ENCODE measurements at regions of chr9 and their contacts with region 1.

Region 1: GRCh38 chr9:108272349-108272899 is 583.4 kb downstream of the ACTL7B start:
- DNase-seq: peak; percentile 55
- H3K4me3 ChIP-seq: no peak overlapping the region
- H3K27ac ChIP-seq: peak overlapping the region; percentile 35
- H3K4me1 ChIP-seq: peaks cover 25% of the 10 kb centered on the region
- H3K27me3 ChIP-seq: no peaks in the 10 kb centered on the region
- CTCF ChIP-seq: peak; percentile 61 to 70

Region 2: GRCh38 chr9:107465467-107466451 is 806.7 kb before region 1 on chr9:
- CTCF ChIA-PET with region 1: interaction called, 3 read pairs
- dilution Hi-C with region 1: no loop called
- in situ Hi-C with region 1: loop called in 1 of 2 experiments (anchors 25 kb)
- intact Hi-C with region 1: loop called (anchors 1 kb)
- DNase-seq: peak; percentile 50
- H3K4me3 ChIP-seq: peak overlapping the region; percentile 51 to 71 (median 59)
- H3K27ac ChIP-seq: no peak overlapping the region
- H3K4me1 ChIP-seq: peaks cover 11% of the 10 kb centered on the region
- H3K27me3 ChIP-seq: no peaks in the 10 kb centered on the region
- CTCF ChIP-seq: peak; percentile 63 to 83

Region 3: GRCh38 chr9:107637421-107638420 is 634.7 kb before region 1 on chr9:
- CTCF ChIA-PET with region 1: no interaction called
- dilution Hi-C with region 1: no loop called
- in situ Hi-C with region 1: no loop called
- intact Hi-C with region 1: loop called (anchors 1 kb)
- DNase-seq: peak; percentile 50
- H3K4me3 ChIP-seq: peak overlapping the region; percentile 39 to 68 (median 54)
- H3K27ac ChIP-seq: no peak overlapping the region
- H3K4me1 ChIP-seq: no peaks in the 10 kb centered on the region
- H3K27me3 ChIP-seq: no peaks in the 10 kb centered on the region
- CTCF ChIP-seq: no peak

Region 4: GRCh38 chr9:107749787-107750444 is 522.5 kb before region 1 on chr9:
- CTCF ChIA-PET with region 1: no interaction called
- dilution Hi-C with region 1: no loop called
- in situ Hi-C with region 1: no loop called
- intact Hi-C with region 1: loop called (anchors 5 kb)
- DNase-seq: peak; percentile 88
- H3K4me3 ChIP-seq: no peak overlapping the region
- H3K27ac ChIP-seq: peak overlapping the region; percentile 60
- H3K4me1 ChIP-seq: peaks cover 36% of the 10 kb centered on the region
- H3K27me3 ChIP-seq: no peaks in the 10 kb centered on the region
- CTCF ChIP-seq: no peak

Region 5: DNA sequence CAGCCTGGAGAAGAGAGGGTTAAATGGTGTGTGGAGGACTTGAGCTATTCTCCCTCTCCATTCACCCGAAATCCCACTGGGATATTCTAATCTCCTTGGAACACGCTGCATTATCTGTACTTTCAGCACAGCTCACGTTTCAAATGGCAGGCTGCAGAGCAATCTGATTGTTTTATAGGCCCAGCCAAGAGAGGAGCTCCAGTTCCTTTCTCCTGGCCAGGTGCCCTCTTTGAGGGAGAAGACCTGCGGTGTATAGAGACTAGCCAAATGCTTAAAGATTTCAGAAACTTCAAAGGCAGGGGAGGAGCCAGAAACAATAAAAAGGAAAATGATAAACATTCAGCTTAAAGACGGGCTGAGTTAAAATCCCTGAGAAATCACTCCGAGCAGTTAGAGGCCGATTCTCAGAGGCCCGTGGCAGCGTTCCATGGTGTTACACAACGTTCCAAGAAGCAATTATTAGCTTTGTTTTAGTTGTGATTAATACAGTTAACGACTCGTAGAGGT is 218.8 kb before region 1 on chr9:
- CTCF ChIA-PET with region 1: no interaction called
- dilution Hi-C with region 1: no loop called
- in situ Hi-C with region 1: no loop called
- intact Hi-C with region 1: loop called (anchors 1 kb)
- DNase-seq: peak; percentile 76
- H3K4me3 ChIP-seq: no peak overlapping the region
- H3K27ac ChIP-seq: peak overlapping the region; percentile 79
- H3K4me1 ChIP-seq: peaks cover 76% of the 10 kb centered on the region
- H3K27me3 ChIP-seq: no peaks in the 10 kb centered on the region
- CTCF ChIP-seq: no peak

Region 6: GRCh38 chr9:108322326-108323098 is 50.1 kb after region 1 on chr9:
- CTCF ChIA-PET with region 1: no interaction called
- dilution Hi-C with region 1: no loop called
- in situ Hi-C with region 1: no loop called
- intact Hi-C with region 1: no loop called
- DNase-seq: peak; percentile 39
- H3K4me3 ChIP-seq: no peak overlapping the region
- H3K27ac ChIP-seq: peak overlapping the region; percentile 63
- H3K4me1 ChIP-seq: peaks cover 21% of the 10 kb centered on the region
- H3K27me3 ChIP-seq: no peaks in the 10 kb centered on the region
- CTCF ChIP-seq: no peak

Region 7: GRCh38 chr9:108423433-108423832 is 151.0 kb after region 1 on chr9:
- CTCF ChIA-PET with region 1: no interaction called
- dilution Hi-C with region 1: no loop called
- in situ Hi-C with region 1: no loop called
- intact Hi-C with region 1: no loop called
- DNase-seq: no peak
- H3K4me3 ChIP-seq: no peak overlapping the region
- H3K27ac ChIP-seq: no peak overlapping the region
- H3K4me1 ChIP-seq: no peaks in the 10 kb centered on the region
- H3K27me3 ChIP-seq: no peaks in the 10 kb centered on the region
- CTCF ChIP-seq: peak in 1 of 2 donors; percentile 11

Region 8: DNA sequence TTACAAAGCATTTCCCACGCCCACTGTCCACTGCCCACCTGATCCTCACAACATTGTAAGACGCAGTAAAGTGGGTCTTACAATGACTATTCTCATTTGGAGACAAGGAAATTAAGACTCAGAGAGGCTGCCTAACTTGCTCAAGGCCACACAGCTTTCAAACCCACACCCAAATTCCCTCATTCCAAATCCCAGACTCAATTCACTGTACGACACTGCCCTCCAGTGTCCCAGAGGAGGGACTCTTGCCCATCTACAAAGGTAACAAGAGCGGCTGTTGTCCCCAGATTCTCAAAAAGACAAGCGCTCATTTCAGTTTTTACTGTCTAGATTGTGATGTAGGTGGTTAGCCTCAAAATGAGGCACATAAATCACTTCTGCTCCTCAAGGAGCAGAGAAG is 398.8 kb after region 1 on chr9:
- CTCF ChIA-PET with region 1: no interaction called
- dilution Hi-C with region 1: no loop called
- in situ Hi-C with region 1: no loop called
- intact Hi-C with region 1: loop called (anchors 2 kb)
- DNase-seq: peak; percentile 58
- H3K4me3 ChIP-seq: no peak overlapping the region
- H3K27ac ChIP-seq: peak overlapping the region; percentile 73
- H3K4me1 ChIP-seq: peaks cover 35% of the 10 kb centered on the region
- H3K27me3 ChIP-seq: no peaks in the 10 kb centered on the region
- CTCF ChIP-seq: peak; percentile 68 to 78

Measured in mammary epithelial cell (primary cell).